ENCODE measurements at regions of chr7 and their contacts with region 1.

Region 1: GRCh38 chr7:75994388-75995051 is at the start of gene TMEM120A:
- DNase-seq: peak; percentile 92
- ATAC-seq: peak; percentile 99
- H3K4me3 Mint-ChIP-seq: peak within 1 kb of the TSS; percentile 81
- H3K27ac Mint-ChIP-seq: peak within 1 kb of the TSS; percentile 25
- H3K4me1 Mint-ChIP-seq: peaks cover 39% of the 10 kb centered on the region
- H3K27me3 Mint-ChIP-seq: no peaks in the 10 kb centered on the region
- CTCF ChIP-seq: no peak
- total RNA-seq, gene TMEM120A: 95.6 and 104 TPM in 2 replicates

Region 2: DNA sequence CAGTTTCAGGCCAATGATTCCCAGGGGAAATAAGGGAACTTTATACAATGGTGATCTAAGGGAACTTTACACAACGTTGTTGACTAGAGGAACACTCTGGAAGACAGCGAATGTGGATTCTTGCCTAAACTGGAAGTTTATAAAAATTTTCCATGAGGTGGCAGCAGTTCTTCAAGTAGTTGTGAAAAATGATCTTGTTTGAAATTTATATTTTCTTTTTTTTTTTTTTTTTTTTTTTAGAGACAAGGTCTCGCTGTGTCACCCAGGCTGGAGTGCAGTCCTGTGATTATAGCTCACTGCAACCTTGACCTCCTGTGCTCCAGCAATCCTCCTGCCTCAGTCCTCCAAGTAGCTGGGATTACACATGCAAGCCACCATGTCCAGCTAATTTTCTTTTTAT is 1369.1 kb before region 1 on chr7:
- CTCF ChIA-PET with region 1: no interaction called
- POLR2A ChIA-PET with region 1: no interaction called
- intact Hi-C with region 1: no loop called
- DNase-seq: no peak
- ATAC-seq: peak; percentile 42
- H3K4me3 Mint-ChIP-seq: no peak overlapping the region
- H3K27ac Mint-ChIP-seq: no peak overlapping the region
- H3K4me1 Mint-ChIP-seq: peaks cover 3% of the 10 kb centered on the region
- H3K27me3 Mint-ChIP-seq: no peaks in the 10 kb centered on the region
- CTCF ChIP-seq: no peak

Region 3: GRCh38 chr7:75878769-75879611 is 115.5 kb before region 1 on chr7 and contains the start of gene RHBDD2:
- CTCF ChIA-PET with region 1: no interaction called
- POLR2A ChIA-PET with region 1: interaction called, 5 read pairs
- intact Hi-C with region 1: loop called (anchors 2 kb)
- DNase-seq: peak; percentile 89
- ATAC-seq: peak; percentile 98
- H3K4me3 Mint-ChIP-seq: peak within 1 kb of the TSS; percentile 97
- H3K27ac Mint-ChIP-seq: peak within 1 kb of the TSS; percentile 94
- H3K4me1 Mint-ChIP-seq: peaks cover 26% of the 10 kb centered on the region
- H3K27me3 Mint-ChIP-seq: no peaks in the 10 kb centered on the region
- CTCF ChIP-seq: no peak
- total RNA-seq, gene RHBDD2: 28.4 and 32.8 TPM in 2 replicates

Region 4: GRCh38 chr7:76008156-76008687 is 13.7 kb after region 1 on chr7:
- CTCF ChIA-PET with region 1: no interaction called
- POLR2A ChIA-PET with region 1: interaction called, 11 read pairs
- intact Hi-C with region 1: no loop called
- DNase-seq: no peak
- ATAC-seq: peak; percentile 41
- H3K4me3 Mint-ChIP-seq: peak overlapping the region; percentile 55
- H3K27ac Mint-ChIP-seq: peak overlapping the region; percentile 83
- H3K4me1 Mint-ChIP-seq: peaks cover 42% of the 10 kb centered on the region
- H3K27me3 Mint-ChIP-seq: no peaks in the 10 kb centered on the region
- CTCF ChIP-seq: no peak

Region 5: GRCh38 chr7:76047811-76048667 is 53.5 kb after region 1 on chr7 and contains the starts of genes MDH2 and STYXL1:
- CTCF ChIA-PET with region 1: no interaction called
- POLR2A ChIA-PET with region 1: interaction called, 4 read pairs
- intact Hi-C with region 1: loop called (anchors 2 kb)
- DNase-seq: peak; percentile 82
- ATAC-seq: peak; percentile 89
- H3K4me3 Mint-ChIP-seq: peak within 1 kb of the TSS; percentile 98
- H3K27ac Mint-ChIP-seq: peak within 1 kb of the TSS; percentile 95
- H3K4me1 Mint-ChIP-seq: peaks cover 40% of the 10 kb centered on the region
- H3K27me3 Mint-ChIP-seq: no peaks in the 10 kb centered on the region
- CTCF ChIP-seq: no peak
- total RNA-seq, gene MDH2: 120 and 125 TPM in 2 replicates
- total RNA-seq, gene STYXL1: 23.1 and 28.1 TPM in 2 replicates

Region 6: GRCh38 chr7:76302347-76303201 is 308.1 kb after region 1 on chr7 and contains the start of gene HSPB1:
- CTCF ChIA-PET with region 1: no interaction called
- POLR2A ChIA-PET with region 1: no interaction called
- intact Hi-C with region 1: loop called (anchors 5 kb)
- DNase-seq: peak; percentile 65
- ATAC-seq: peak; percentile 76
- H3K4me3 Mint-ChIP-seq: peak within 1 kb of the TSS; percentile 90
- H3K27ac Mint-ChIP-seq: peak within 1 kb of the TSS; percentile 81
- H3K4me1 Mint-ChIP-seq: peaks cover 13% of the 10 kb centered on the region
- H3K27me3 Mint-ChIP-seq: no peaks in the 10 kb centered on the region
- CTCF ChIP-seq: no peak
- total RNA-seq, gene HSPB1: 63.4 and 65.6 TPM in 2 replicates

Measured in activated B cell treated with CpG ODN at 0.5 μM for 24 hours (primary cell).